ENCODE measurements at regions of chr18 and their contacts with region 1.

Region 1: DNA sequence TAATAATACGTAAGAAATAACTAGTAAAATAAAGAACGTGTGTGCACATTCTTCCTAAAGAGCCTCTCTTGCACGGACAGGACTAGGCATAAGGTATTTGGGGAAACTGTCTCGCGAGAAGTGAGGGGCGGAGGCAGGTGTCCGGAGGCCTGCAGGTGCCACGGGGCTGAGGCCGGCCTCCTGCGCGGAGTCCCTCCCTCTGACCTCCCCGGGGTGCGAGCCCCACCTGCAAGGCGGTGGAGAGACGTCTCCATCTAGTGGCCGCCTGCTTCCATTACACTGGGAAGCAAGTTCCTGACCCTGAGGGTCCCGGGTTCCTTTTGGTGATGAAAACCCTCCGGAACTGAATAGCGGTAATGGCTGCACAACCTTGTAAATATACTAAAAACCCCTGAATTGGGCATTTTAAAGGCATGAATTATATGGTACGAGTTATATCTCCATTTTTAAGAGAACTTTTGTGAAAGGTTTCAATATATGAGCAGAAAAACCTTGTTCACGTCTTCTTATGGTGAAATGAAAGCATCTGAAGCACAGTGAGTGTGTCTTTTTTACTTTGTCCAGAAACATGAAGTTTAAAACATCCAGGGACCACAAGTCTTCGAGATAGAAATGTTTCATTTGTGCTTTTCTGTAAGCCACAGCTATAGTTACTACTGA is 35.5 kb upstream of the CTDP1 start:
- DNase-seq: peak; percentile 48
- H3K4me3 ChIP-seq: no peak overlapping the region
- H3K27ac ChIP-seq: no peak overlapping the region
- H3K4me1 ChIP-seq: no peaks in the 10 kb centered on the region
- H3K27me3 ChIP-seq: no peaks in the 10 kb centered on the region
- CTCF ChIP-seq: peak; percentile 92

Region 2: GRCh38 chr18:79092874-79093273 is 551.3 kb before region 1 on chr18:
- intact Hi-C with region 1: no loop called
- DNase-seq: no peak
- H3K4me3 ChIP-seq: no peak overlapping the region
- H3K27ac ChIP-seq: no peak overlapping the region
- H3K4me1 ChIP-seq: no peaks in the 10 kb centered on the region
- H3K27me3 ChIP-seq: no peaks in the 10 kb centered on the region
- CTCF ChIP-seq: no peak

Region 3: GRCh38 chr18:79528846-79529245 is 115.3 kb before region 1 on chr18:
- intact Hi-C with region 1: loop called (anchors 2 kb)
- DNase-seq: peak; percentile 67
- H3K4me3 ChIP-seq: no peak overlapping the region
- H3K27ac ChIP-seq: no peak overlapping the region
- H3K4me1 ChIP-seq: no peaks in the 10 kb centered on the region
- H3K27me3 ChIP-seq: no peaks in the 10 kb centered on the region
- CTCF ChIP-seq: peak; percentile 83

Region 4: GRCh38 chr18:79819968-79820351 is 175.8 kb after region 1 on chr18:
- intact Hi-C with region 1: no loop called
- DNase-seq: no peak
- H3K4me3 ChIP-seq: no peak overlapping the region
- H3K27ac ChIP-seq: no peak overlapping the region
- H3K4me1 ChIP-seq: no peaks in the 10 kb centered on the region
- H3K27me3 ChIP-seq: no peaks in the 10 kb centered on the region
- CTCF ChIP-seq: no peak

Region 5: GRCh38 chr18:80023173-80023572 is 379.0 kb after region 1 on chr18:
- intact Hi-C with region 1: no loop called
- DNase-seq: no peak
- H3K4me3 ChIP-seq: no peak overlapping the region
- H3K27ac ChIP-seq: no peak overlapping the region
- H3K4me1 ChIP-seq: no peaks in the 10 kb centered on the region
- H3K27me3 ChIP-seq: no peaks in the 10 kb centered on the region
- CTCF ChIP-seq: no peak

Measured in colonic mucosa (tissue), 4 donors.